Adrenal gland (tissue), 19 donors: ENCODE measurements at regions of chr21 and their contacts with region 1.

Region 1: GRCh38 chr21:44329086-44329889 is 9.9 kb downstream of the CFAP410 start:
- DNase-seq: no peak
- H3K4me3 ChIP-seq: no peak overlapping the region
- H3K27ac ChIP-seq: no peak overlapping the region
- H3K4me1 ChIP-seq: no peaks in the 10 kb centered on the region
- H3K27me3 ChIP-seq: no peaks in the 10 kb centered on the region
- CTCF ChIP-seq: no peak
- POLR2A ChIP-seq: no peak

Region 2: GRCh38 chr21:44461464-44462001 is 132.2 kb after region 1 on chr21:
- intact Hi-C with region 1: loop called in 1 of 2 experiments (anchors 10 kb)
- DNase-seq: no peak
- H3K4me3 ChIP-seq: no peak overlapping the region
- H3K27ac ChIP-seq: no peak overlapping the region
- H3K4me1 ChIP-seq: no peaks in the 10 kb centered on the region
- H3K27me3 ChIP-seq: no peaks in the 10 kb centered on the region
- CTCF ChIP-seq: peak in 2 of 6 experiments; percentile 6 to 12
- POLR2A ChIP-seq: no peak